Caco-2 (cell line): ENCODE measurements at regions of chr7 and their contacts with region 1.

Region 1: DNA sequence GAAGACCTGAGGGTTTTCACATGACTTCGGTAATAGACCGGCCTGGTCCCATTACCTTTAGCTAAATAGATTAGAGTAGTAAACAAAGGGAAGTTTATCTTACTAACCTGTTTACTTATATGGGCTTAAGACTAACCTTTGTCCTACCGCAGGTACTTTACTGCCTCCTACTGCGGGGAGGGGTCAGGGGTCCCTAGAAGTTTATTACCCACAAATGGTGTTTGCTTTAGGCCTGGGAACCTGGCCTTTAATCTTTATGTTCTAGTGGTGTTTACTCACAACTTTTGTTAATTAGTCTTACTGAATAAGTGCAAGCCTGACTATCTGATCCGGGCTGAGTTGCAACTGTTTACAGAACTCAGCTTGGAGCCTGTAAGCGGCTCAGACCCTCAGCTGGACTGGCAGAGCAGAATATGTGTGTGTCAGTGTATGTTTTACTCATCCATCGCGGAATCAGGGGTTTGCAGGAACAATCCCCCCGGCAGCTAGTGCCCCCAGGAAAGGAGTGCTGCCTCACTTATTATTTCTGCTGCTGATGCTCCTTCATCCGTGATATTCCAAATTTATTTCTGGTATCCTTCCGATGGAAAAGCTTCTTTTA is 578.9 kb upstream of the SEMA3D start:
- DNase-seq: peak; percentile 78 to 86
- H3K4me3 ChIP-seq: peak overlapping the region; percentile 14; the same call in 1 of the 2 replicates
- H3K4me3 Mint-ChIP-seq: peak overlapping the region; percentile 48
- H3K27ac Mint-ChIP-seq: no peak overlapping the region
- H3K4me1 ChIP-seq: peaks cover 25% of the 10 kb centered on the region
- H3K4me1 Mint-ChIP-seq: peaks cover 23% of the 10 kb centered on the region
- H3K27me3 ChIP-seq: no peaks in the 10 kb centered on the region
- H3K27me3 Mint-ChIP-seq: no peaks in the 10 kb centered on the region
- CTCF ChIP-seq: no peak

Region 2: GRCh38 chr7:85415743-85416142 is 350.1 kb before region 1 on chr7:
- CTCF ChIA-PET with region 1: no interaction called
- POLR2A ChIA-PET with region 1: no interaction called
- intact Hi-C with region 1: loop called (anchors 1 kb)
- DNase-seq: peak in 1 of 2 experiments; percentile 15
- H3K4me3 ChIP-seq: no peak overlapping the region
- H3K4me3 Mint-ChIP-seq: no peak overlapping the region
- H3K27ac Mint-ChIP-seq: no peak overlapping the region
- H3K4me1 ChIP-seq: 0 out of 2 replicates have a peak, but pooled peaks cover 5% of the 10 kb centered on the region
- H3K4me1 Mint-ChIP-seq: peaks cover 18% of the 10 kb centered on the region
- H3K27me3 ChIP-seq: no peaks in the 10 kb centered on the region
- H3K27me3 Mint-ChIP-seq: no peaks in the 10 kb centered on the region
- CTCF ChIP-seq: no peak

Region 3: DNA sequence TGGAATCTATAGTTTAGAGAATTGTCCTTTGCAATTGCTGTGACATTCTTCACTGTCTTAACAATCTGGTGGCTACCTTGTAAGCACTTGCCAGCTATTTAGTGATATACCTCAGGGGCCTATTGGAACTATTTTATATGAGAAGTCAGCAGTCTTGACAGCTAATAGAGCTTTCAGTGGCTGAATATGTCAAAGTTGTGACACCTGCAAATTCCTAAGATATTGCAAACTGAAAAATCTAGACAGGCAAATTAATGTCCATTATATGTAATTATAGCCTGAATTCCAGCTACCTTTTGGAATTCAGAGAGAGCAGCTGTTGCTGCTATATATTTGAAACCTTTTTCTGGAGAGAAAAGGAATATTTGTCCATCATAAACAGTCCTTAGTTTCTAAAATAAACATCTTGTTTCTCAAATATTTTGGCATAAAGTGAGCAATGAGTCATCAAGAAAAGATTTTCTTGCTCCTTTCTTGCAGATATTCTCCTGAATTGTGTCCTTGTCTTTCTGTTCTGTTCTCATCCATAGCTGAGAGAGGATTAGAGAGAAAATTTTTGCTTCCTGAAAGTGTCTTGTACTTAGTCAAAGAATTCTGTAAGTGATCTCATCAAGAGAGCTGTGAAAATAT is 170.0 kb before region 1 on chr7:
- CTCF ChIA-PET with region 1: no interaction called
- POLR2A ChIA-PET with region 1: no interaction called
- intact Hi-C with region 1: loop called (anchors 1 kb)
- DNase-seq: no peak
- H3K4me3 ChIP-seq: no peak overlapping the region
- H3K4me3 Mint-ChIP-seq: no peak overlapping the region
- H3K27ac Mint-ChIP-seq: no peak overlapping the region
- H3K4me1 ChIP-seq: peaks cover 36% of the 10 kb centered on the region
- H3K4me1 Mint-ChIP-seq: peaks cover 19% of the 10 kb centered on the region
- H3K27me3 ChIP-seq: no peaks in the 10 kb centered on the region
- H3K27me3 Mint-ChIP-seq: no peaks in the 10 kb centered on the region
- CTCF ChIP-seq: no peak

Region 4: GRCh38 chr7:85733163-85733915 is 32.5 kb before region 1 on chr7:
- CTCF ChIA-PET with region 1: no interaction called
- POLR2A ChIA-PET with region 1: no interaction called
- intact Hi-C with region 1: loop called (anchors 1 kb)
- DNase-seq: peak in 1 of 2 experiments; percentile 14
- H3K4me3 ChIP-seq: no peak overlapping the region
- H3K4me3 Mint-ChIP-seq: no peak overlapping the region
- H3K27ac Mint-ChIP-seq: peak overlapping the region; percentile 71
- H3K4me1 ChIP-seq: peaks cover 20% of the 10 kb centered on the region
- H3K4me1 Mint-ChIP-seq: peaks cover 16% of the 10 kb centered on the region
- H3K27me3 ChIP-seq: no peaks in the 10 kb centered on the region
- H3K27me3 Mint-ChIP-seq: no peaks in the 10 kb centered on the region
- CTCF ChIP-seq: no peak